HAP-1 (cell line): ENCODE measurements at regions of chr15 and their contacts with region 1.

Region 1: DNA sequence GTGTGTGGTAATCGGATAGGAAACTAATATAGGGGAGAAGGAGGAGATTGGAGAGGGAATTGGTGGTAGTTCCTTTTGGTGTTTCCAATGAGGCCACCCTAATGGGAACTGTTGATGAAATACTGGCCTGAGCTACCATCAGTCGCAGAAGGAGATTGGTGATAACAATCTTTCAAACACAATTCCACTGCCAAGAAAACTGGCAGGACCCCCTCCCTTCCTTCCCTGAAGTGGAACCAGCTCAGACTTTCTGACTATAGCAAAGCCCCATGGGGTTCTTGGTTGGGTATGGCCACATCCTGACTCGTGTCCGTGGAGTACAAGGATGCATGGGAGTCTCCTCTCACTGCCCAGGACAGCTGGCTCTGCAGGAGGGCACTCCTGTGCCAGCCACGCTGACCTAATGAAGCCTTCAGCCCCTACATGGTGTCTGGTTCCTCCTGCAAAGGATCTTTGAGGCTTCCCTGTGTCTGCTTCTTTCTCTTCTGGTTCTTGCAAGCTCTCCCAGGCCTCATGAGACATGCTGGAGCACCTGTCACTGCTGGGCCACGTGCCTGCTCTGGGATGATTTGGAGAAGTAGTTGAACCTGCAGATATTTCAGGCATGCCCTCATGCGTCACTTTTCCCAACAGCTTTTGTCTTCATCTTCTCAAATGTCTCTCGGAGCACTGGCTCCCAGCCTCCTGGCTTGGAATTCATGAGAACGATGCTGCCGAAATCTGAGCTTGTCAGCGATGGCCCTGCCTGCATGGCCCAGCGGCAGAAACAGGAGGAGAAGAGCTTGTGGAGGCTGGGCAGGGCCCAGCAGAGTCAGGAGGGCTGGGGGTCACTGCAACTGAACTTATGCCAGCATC is 90.0 kb upstream of the ADPGK start:
- DNase-seq: no peak
- H3K4me3 ChIP-seq: no peak overlapping the region
- H3K4me1 ChIP-seq: no peaks in the 10 kb centered on the region
- H3K27me3 ChIP-seq: peaks cover 4% of the 10 kb centered on the region

Region 2: GRCh38 chr15:72933976-72934375 is 60.4 kb after region 1 on chr15:
- in situ Hi-C with region 1: loop called (anchors 10 kb)
- DNase-seq: no peak
- H3K4me3 ChIP-seq: no peak overlapping the region
- H3K4me1 ChIP-seq: no peaks in the 10 kb centered on the region
- H3K27me3 ChIP-seq: peaks cover 20% of the 10 kb centered on the region